T-cell (primary cell): ENCODE measurements at regions of chr11 and their contacts with region 1.

Region 1: GRCh38 chr11:19259487-19260345 is 19.0 kb upstream of the E2F8 start:
- DNase-seq: peak in 29 of 35 experiments; percentile 17 to 73 (median 50)
- ATAC-seq: peak; percentile 46 to 79 (median 64)
- H3K4me3 ChIP-seq: no peak overlapping the region
- H3K4me3 Mint-ChIP-seq: no peak overlapping the region
- H3K27ac ChIP-seq: no peak overlapping the region
- H3K27ac Mint-ChIP-seq: no peak overlapping the region
- H3K4me1 ChIP-seq: no peaks in the 10 kb centered on the region
- H3K4me1 Mint-ChIP-seq: peaks cover 0 to 3% (median 0%) of the 10 kb centered on the region in 3 donors
- H3K27me3 ChIP-seq: peaks cover 2 to 4% of the 10 kb centered on the region in 2 experiments
- H3K27me3 Mint-ChIP-seq: peaks cover 4 to 9% of the 10 kb centered on the region in 2 donors

Region 2: DNA sequence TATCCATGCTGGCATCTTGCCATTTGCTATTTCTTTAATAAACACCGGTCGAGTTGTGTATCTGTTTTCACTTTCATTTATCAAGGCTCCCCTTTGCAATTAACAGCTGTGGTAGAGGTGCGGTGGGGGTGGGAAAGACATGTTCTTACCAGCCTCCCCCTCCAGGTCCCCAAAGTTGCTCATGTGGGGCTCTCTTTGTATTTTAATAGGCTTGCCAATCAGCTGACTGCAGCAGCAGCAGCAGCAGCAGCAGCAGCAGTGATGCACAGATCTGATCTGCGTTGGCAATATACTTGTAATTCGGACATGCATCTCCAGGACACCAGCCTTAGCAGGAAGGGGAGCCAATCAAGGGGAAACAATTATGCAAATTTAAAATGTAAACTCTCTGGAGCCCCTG is 21.3 kb after region 1 on chr11:
- CTCF ChIA-PET with region 1: interaction called, 5 to 12 read pairs
- POLR2A ChIA-PET with region 1: no interaction called
- DNase-seq: peak in 29 of 35 experiments; percentile 11 to 70 (median 43)
- ATAC-seq: peak in 2 of 4 experiments; percentile 37 to 55
- H3K4me3 ChIP-seq: no peak overlapping the region
- H3K4me3 Mint-ChIP-seq: no peak overlapping the region
- H3K27ac ChIP-seq: no peak overlapping the region
- H3K27ac Mint-ChIP-seq: no peak overlapping the region
- H3K4me1 ChIP-seq: peaks cover 0 to 41% of the 10 kb centered on the region in 2 experiments
- H3K4me1 Mint-ChIP-seq: peaks cover 9 to 23% (median 13%) of the 10 kb centered on the region in 3 donors
- H3K27me3 ChIP-seq: no peaks in the 10 kb centered on the region
- H3K27me3 Mint-ChIP-seq: peaks cover 0 to 4% of the 10 kb centered on the region in 2 donors

Region 3: GRCh38 chr11:20197881-20198280 is 938.2 kb after region 1 on chr11:
- CTCF ChIA-PET with region 1: interaction called in 1 of 2 experiments, 10 read pairs
- POLR2A ChIA-PET with region 1: no interaction called
- DNase-seq: no peak
- ATAC-seq: no peak
- H3K4me3 ChIP-seq: no peak overlapping the region
- H3K4me3 Mint-ChIP-seq: no peak overlapping the region
- H3K27ac ChIP-seq: no peak overlapping the region
- H3K27ac Mint-ChIP-seq: no peak overlapping the region
- H3K4me1 ChIP-seq: no peaks in the 10 kb centered on the region
- H3K4me1 Mint-ChIP-seq: peaks cover 0 to 4% (median 2%) of the 10 kb centered on the region in 3 donors
- H3K27me3 ChIP-seq: peaks cover 5 to 10% of the 10 kb centered on the region in 2 experiments
- H3K27me3 Mint-ChIP-seq: peaks cover 26 to 35% of the 10 kb centered on the region in 2 donors